ENCODE measurements at regions of chr5 and their contacts with region 1.

Region 1: DNA sequence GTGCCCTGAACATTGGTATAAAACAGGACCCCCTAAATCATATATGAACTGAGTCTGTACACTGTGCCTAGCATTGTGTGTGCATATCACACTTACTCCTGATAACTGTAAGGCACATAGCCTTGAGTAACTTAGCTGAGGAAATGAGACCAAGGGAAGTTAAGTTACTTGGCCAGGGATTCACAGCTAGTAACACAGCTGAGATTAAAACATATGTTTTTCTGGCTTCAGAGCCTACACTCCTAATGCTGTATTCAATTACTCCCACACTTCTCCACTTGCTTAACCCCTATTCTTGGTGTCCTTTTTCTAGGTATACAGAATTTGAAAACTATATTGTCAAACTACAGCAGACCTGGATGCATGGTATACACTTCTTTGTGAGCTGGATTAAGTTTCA is 12.8 kb downstream of the GHR start:
- DNase-seq: no peak
- ATAC-seq: no peak
- H3K4me3 ChIP-seq: no peak overlapping the region
- H3K27ac ChIP-seq: no peak overlapping the region
- H3K4me1 ChIP-seq: no peaks in the 10 kb centered on the region
- H3K27me3 ChIP-seq: no peaks in the 10 kb centered on the region
- CTCF ChIP-seq: no peak
- EP300 ChIP-seq: no peak
- POLR2A ChIP-seq: no peak
- RAD21 ChIP-seq: no peak

Region 2: GRCh38 chr5:42454216-42454995 is 18.4 kb after region 1 on chr5:
- CTCF ChIA-PET with region 1: interaction called, 5 read pairs
- POLR2A ChIA-PET with region 1: interaction called, 8 read pairs
- RAD21 ChIA-PET with region 1: interaction called, 9 read pairs
- SMC1A ChIA-PET with region 1: interaction called, 16 read pairs
- in situ Hi-C with region 1: no loop called
- intact Hi-C with region 1: no loop called
- DNase-seq: no peak
- ATAC-seq: peak; percentile 42; the same call in 2 of the 3 replicates
- H3K4me3 ChIP-seq: no peak overlapping the region
- H3K27ac ChIP-seq: no peak overlapping the region
- H3K4me1 ChIP-seq: no peaks in the 10 kb centered on the region
- H3K27me3 ChIP-seq: no peaks in the 10 kb centered on the region
- CTCF ChIP-seq: no peak
- EP300 ChIP-seq: no peak
- POLR2A ChIP-seq: no peak
- RAD21 ChIP-seq: no peak

Measured in GM12878 (cell line).